ENCODE measurements at regions of chr9 and their contacts with region 1.

Region 1: DNA sequence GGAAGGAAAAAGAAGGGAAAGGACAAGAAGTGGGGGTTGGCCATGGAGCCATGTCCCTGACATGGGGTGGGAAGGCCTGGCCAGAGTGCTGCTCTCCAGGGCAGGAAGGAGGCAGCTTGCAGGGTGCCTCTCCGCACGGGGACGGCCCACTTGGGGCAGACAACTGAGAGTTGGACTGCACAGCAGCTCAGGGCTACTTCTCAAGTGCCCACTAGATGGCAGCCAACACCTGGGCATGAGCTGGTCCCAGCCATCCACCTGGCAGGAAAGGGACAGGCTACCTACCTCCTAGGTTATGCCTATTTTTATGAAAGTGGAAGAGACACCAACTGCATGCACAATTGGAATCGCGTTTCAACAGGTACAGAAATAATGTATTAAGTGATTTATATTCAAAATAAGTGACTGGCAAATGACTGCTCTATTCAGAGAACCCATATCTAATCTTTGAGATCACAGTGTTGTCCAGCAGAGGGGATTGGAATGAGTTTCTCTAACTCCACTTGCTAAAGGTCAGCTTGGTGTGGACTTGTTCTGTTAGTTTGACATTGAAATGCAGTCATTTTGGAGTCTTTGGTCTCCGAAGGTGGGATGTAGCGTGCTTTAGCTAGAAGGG is 113.4 kb downstream of the SYK start:
- ATAC-seq: peak; percentile 95 to 99 (median 98)
- H3K4me3 ChIP-seq: no peak overlapping the region
- H3K27ac ChIP-seq: no peak overlapping the region
- H3K4me1 ChIP-seq: no peaks in the 10 kb centered on the region

Region 2: GRCh38 chr9:90464978-90465377 is 450.0 kb before region 1 on chr9:
- in situ Hi-C with region 1: no loop called
- ATAC-seq: peak; percentile 67 to 93 (median 84)
- H3K4me3 ChIP-seq: no peak overlapping the region
- H3K27ac ChIP-seq: no peak overlapping the region
- H3K4me1 ChIP-seq: peaks cover 23 to 36% of the 10 kb centered on the region in 2 donors

Region 3: GRCh38 chr9:90815183-90815943 is 99.6 kb before region 1 on chr9:
- in situ Hi-C with region 1: no loop called
- ATAC-seq: peak in 5 of 8 experiments; percentile 52 to 71 (median 58)
- H3K4me3 ChIP-seq: no peak overlapping the region
- H3K27ac ChIP-seq: no peak overlapping the region
- H3K4me1 ChIP-seq: peaks cover 0 to 3% of the 10 kb centered on the region in 2 donors

Region 4: DNA sequence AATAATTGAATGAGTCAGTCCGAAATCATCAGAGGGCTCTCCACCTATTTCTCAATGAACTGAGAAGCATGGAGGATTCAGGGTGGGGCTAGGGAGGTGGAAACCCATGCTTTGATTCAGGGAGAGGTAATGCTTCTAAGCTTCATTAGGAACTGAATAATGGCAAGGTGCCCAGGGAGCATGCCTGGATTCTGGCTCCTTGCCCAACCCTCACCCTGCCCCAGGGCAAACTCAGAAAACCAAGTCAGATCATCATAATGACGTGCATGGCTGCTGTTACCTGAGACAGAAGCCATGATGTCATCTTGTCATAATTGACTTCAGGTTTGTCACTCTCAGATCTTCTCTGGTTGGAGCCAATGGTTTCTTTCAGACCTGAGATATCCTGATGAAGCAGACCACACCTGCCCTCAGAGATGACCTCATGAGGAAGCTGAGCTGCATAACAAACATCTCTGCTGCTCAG is 86.2 kb after region 1 on chr9:
- in situ Hi-C with region 1: loop called in 1 of 9 experiments (anchors 25 kb)
- ATAC-seq: peak in 3 of 8 experiments; percentile 59 to 91 (median 88)
- H3K4me3 ChIP-seq: no peak overlapping the region
- H3K27ac ChIP-seq: no peak overlapping the region
- H3K4me1 ChIP-seq: no peaks in the 10 kb centered on the region

Region 5: DNA sequence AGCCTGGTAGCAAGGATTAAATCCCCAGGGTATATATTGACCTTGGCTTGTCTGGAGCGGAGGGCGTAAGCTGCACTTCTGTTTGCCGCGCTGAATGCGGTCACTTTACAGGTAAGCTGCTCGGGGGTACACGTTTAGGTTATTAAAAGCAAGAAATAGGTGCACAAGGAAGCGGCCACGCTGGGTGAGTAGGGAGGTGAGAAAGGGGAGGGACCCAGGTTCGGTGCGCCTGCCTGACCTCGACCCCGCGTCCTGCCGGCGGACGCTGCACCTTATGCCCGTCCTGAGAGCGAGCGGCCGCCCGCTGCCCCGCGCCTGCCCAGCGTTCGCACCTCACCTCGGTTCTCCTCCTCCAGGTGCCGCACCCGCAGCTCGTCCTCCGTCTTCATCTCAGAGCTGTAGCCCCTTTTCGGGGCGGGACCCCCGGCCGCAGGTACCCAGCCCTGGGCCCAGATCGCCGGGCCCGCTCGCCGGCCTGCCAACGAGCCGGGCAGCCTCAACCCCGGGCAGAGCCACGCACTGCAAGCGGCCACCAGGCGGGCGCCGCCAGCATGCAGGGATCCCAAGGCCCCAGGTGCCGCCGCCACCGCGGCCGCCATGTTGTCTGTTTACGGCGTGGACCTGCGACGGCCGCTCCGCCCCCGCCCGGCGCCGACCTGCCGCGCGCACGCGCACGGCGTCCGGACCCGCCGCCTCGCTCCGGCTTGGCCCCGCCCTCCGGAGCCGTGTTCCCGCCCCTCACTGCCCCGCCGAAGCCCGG is 446.5 kb after region 1 on chr9 and contains the start of gene AUH:
- in situ Hi-C with region 1: loop called in 1 of 9 experiments (anchors 25 kb)
- ATAC-seq: peak; percentile 78 to 94 (median 91)
- H3K4me3 ChIP-seq: peak within 1 kb of the TSS; percentile 79 to 99 (median 97)
- H3K27ac ChIP-seq: peak within 1 kb of the TSS; percentile 88 to 96
- H3K4me1 ChIP-seq: peaks cover 13 to 19% of the 10 kb centered on the region in 2 donors
- total RNA-seq, gene AUH: 13.4 to 22.9 (median 19.4) TPM

Region 6: GRCh38 chr9:91433180-91433579 is 518.2 kb after region 1 on chr9:
- in situ Hi-C with region 1: loop called in 3 of 9 experiments (anchors 10 to 25 kb)
- ATAC-seq: peak in 4 of 8 experiments; percentile 33 to 99 (median 99)
- H3K4me3 ChIP-seq: no peak overlapping the region
- H3K27ac ChIP-seq: no peak overlapping the region
- H3K4me1 ChIP-seq: no peaks in the 10 kb centered on the region

Region 7: GRCh38 chr9:91711755-91712601 is 797.0 kb after region 1 on chr9:
- in situ Hi-C with region 1: loop called in 1 of 9 experiments (anchors 25 kb)
- ATAC-seq: no peak
- H3K4me3 ChIP-seq: no peak overlapping the region
- H3K27ac ChIP-seq: no peak overlapping the region
- H3K4me1 ChIP-seq: no peaks in the 10 kb centered on the region

Region 8: GRCh38 chr9:91949946-91950664 is 1035.1 kb after region 1 on chr9 and contains the start of gene ROR2:
- in situ Hi-C with region 1: loop called in 1 of 9 experiments (anchors 25 kb)
- ATAC-seq: peak; percentile 71 to 90 (median 82)
- H3K4me3 ChIP-seq: peak within 1 kb of the TSS; percentile 32 to 54 (median 42)
- H3K27ac ChIP-seq: no peak within 1 kb of the TSS
- H3K4me1 ChIP-seq: peaks cover 4 to 14% of the 10 kb centered on the region in 2 donors
- total RNA-seq, gene ROR2: 0.32 to 26.3 (median 7.4) TPM

Region 9: GRCh38 chr9:92425474-92425873 is 1510.5 kb after region 1 on chr9:
- in situ Hi-C with region 1: no loop called
- ATAC-seq: no peak
- H3K4me3 ChIP-seq: no peak overlapping the region
- H3K27ac ChIP-seq: no peak overlapping the region
- H3K4me1 ChIP-seq: peaks cover 3 to 7% of the 10 kb centered on the region in 2 donors

Measured in motor neuron (in vitro differentiated cells).